HAP-1 (cell line): ENCODE measurements at regions of chr3 and their contacts with region 1.

Region 1: GRCh38 chr3:99172736-99173657 is 271.5 kb upstream of the DCBLD2 start:
- DNase-seq: peak; percentile 60 to 72
- H3K4me3 ChIP-seq: no peak overlapping the region
- H3K4me1 ChIP-seq: no peaks in the 10 kb centered on the region
- H3K27me3 ChIP-seq: no peaks in the 10 kb centered on the region

Region 2: GRCh38 chr3:99023590-99024192 is 149.3 kb before region 1 on chr3:
- in situ Hi-C with region 1: loop called (anchors 10 kb)
- DNase-seq: peak in 1 of 2 experiments; percentile 21
- H3K4me3 ChIP-seq: no peak overlapping the region
- H3K4me1 ChIP-seq: no peaks in the 10 kb centered on the region
- H3K27me3 ChIP-seq: no peaks in the 10 kb centered on the region